Activated CD4-positive, alpha-beta T cell treated with anti-CD3 and anti-CD28 coated beads, Interleukin-2, amount 10 ng/mL, durations not matched to agents 7 days and 5 days (primary cell): ENCODE measurements at regions of chr5 and their contacts with region 1.

Region 1: DNA sequence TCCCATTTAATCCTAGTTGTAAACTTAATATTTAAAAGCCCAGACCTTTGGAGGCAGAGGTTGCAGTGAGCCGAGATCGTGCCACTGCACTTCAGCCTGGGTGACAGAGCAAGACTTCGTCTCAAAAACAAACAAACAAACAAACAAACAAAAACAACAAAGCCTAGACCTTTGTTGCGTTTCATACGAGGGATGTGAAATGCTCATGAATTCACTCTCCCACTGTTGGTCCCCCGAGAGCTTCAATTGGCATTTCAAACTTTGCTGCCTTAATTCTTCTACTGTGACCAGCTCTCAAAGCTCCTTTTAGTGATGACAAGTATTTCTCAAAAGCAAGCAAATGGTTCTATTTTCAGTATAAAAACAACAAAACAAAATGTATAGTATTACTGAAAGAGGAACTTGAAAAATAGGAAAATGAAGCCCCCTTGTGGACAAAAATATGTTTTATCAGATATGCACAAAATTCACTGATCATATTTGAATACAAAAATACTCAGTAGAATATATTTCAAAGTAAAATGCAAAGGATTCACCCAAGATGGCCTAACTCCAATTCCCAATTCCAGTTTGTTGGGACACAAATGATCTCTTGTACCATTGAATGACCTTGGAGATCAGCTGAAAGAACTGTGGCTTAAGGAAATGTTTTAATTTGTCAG is 140.4 kb downstream of the ESM1 start:
- DNase-seq: no peak
- H3K4me3 Mint-ChIP-seq: no peak overlapping the region
- H3K27ac Mint-ChIP-seq: no peak overlapping the region
- H3K4me1 Mint-ChIP-seq: peaks cover 8% of the 10 kb centered on the region
- H3K27me3 Mint-ChIP-seq: peaks cover 21% of the 10 kb centered on the region

Region 2: GRCh38 chr5:54526604-54527288 is 318.3 kb before region 1 on chr5:
- CTCF ChIA-PET with region 1: interaction called, 10 read pairs
- POLR2A ChIA-PET with region 1: no interaction called
- DNase-seq: no peak
- H3K4me3 Mint-ChIP-seq: no peak overlapping the region
- H3K27ac Mint-ChIP-seq: no peak overlapping the region
- H3K4me1 Mint-ChIP-seq: peaks cover 31% of the 10 kb centered on the region
- H3K27me3 Mint-ChIP-seq: no peaks in the 10 kb centered on the region

Region 3: DNA sequence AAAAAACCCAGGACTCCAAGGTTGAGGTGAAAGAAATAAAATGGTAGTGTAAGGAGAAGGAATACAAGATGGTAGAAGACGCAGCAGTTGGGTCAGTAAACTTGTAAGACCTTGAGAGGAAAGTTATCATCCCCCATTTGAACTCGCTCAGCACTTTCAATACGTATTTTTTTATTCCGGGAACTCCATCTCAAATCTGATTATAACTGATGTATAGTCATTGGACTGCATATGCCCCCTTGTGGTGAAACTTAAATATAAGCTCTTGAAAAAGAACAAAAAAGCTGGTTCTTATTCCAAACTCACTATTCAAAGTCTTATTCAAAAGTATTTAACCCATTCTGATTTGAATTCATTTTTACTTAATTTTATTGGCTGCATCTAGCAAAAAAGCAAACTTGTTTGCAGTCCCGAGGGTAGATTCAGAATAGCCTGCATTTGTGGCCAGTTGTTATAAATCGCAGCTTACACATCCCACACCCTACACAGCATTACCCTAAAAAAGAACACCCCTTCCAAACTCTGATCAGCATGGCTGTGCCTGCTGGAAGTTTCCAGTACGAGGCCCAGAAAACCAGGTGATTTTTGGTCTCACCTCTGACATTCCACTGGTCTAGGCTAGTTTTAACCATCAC is 22.4 kb after region 1 on chr5:
- CTCF ChIA-PET with region 1: interaction called, 16 read pairs
- POLR2A ChIA-PET with region 1: no interaction called
- DNase-seq: peak; percentile 26
- H3K4me3 Mint-ChIP-seq: no peak overlapping the region
- H3K27ac Mint-ChIP-seq: no peak overlapping the region
- H3K4me1 Mint-ChIP-seq: peaks cover 29% of the 10 kb centered on the region
- H3K27me3 Mint-ChIP-seq: peaks cover 54% of the 10 kb centered on the region